ENCODE measurements at regions of chr6 and their contacts with region 1.

Region 1: DNA sequence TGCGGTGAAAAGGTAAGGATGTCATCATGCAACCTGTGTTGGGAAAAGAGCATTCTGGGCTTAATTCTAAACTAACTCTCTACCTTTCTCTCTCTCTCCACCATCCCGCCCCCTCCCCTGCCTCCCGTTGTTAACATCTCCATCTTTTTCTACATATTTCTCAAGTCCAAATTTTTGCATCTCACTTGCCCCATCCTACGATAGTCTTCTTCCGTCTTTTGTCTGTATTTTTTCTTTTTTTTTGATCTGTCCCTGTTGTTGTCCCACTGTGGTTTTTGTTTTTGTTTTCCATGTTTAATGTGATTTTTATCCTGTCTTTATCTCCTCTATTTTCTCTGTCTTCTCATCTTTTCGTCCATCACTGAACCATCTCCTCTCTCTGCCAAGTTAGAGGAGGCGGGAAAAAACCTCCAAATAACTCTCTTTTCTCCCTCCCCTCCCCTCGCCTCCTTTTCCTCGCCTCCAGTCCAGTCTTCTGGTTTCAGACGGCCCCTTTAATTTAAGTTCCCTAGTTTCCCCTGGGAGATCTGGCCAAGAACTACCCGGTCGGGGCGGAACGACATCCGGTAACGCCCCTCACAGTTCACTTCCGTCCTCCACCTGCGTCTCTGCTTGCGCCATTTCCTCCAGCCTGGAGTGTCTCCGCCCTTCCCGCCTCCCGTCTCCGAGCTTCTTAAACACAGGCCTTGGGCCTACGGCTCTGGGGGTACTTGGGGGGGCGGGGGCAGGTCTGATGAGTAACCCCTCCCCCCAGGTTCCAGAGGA is at the start of gene NFKBIL1:
- DNase-seq: peak; percentile 96 to 97
- H3K4me3 ChIP-seq: peak within 1 kb of the TSS; percentile 44
- H3K4me1 ChIP-seq: peaks cover 16% of the 10 kb centered on the region
- H3K27me3 ChIP-seq: no peaks in the 10 kb centered on the region

Region 2: GRCh38 chr6:31228476-31228875 is 318.7 kb before region 1 on chr6:
- in situ Hi-C with region 1: no loop called
- DNase-seq: no peak
- H3K4me3 ChIP-seq: no peak overlapping the region
- H3K4me1 ChIP-seq: no peaks in the 10 kb centered on the region
- H3K27me3 ChIP-seq: peaks cover 20% of the 10 kb centered on the region

Region 3: GRCh38 chr6:31592396-31592771 is 45.2 kb after region 1 on chr6:
- in situ Hi-C with region 1: loop called (anchors 5 kb)
- DNase-seq: no peak
- H3K4me3 ChIP-seq: no peak overlapping the region
- H3K4me1 ChIP-seq: no peaks in the 10 kb centered on the region
- H3K27me3 ChIP-seq: no peaks in the 10 kb centered on the region